ENCODE measurements at regions of chr9 and their contacts with region 1.

Region 1: GRCh38 chr9:7976167-7976755 is 176.7 kb upstream of the DMAC1 start:
- DNase-seq: peak; percentile 91
- H3K4me3 Mint-ChIP-seq: peak overlapping the region; percentile 65
- H3K27ac Mint-ChIP-seq: peak overlapping the region; percentile 81
- H3K4me1 Mint-ChIP-seq: peaks cover 49% of the 10 kb centered on the region
- H3K27me3 Mint-ChIP-seq: no peaks in the 10 kb centered on the region

Region 2: DNA sequence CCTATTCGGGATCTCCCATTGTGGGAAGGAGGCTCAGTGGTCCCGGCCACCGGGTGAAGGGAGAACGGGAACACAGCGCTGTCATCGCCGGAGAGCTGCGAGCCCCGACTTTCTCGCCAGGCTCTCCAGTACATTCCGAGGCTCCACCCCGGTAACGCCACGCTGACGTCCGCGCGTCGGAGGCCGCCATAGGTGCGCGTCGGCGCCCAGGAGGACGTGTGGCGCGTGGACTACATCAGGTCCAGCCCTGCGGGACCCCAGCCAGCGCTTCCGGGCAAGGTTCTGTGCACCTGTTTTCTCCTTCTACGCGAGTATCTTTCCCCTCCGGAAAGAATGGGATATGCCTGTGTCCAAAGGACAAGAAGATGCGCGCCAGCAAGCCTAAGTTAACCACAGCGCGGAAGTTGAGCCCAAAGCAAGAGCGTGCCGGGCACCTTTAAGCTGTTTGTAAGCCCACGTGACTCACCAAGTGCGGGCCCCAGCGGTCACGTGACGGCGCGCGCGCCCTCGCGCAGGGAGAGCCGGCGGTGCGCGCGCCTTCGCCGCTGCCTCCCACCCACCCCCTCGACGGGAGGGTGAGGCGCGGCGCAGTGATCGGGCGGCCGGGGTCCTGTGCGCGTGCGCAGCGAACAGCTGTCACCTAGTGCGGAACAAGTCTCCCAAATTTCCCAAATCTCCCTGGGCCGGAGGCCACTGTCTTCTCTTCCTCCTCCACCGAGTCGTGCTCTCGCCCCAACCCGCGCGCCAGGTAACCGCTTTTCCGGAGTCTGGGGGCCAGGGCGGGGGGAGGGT is 1218.6 kb before region 1 on chr9 and contains the start of gene KDM4C:
- intact Hi-C with region 1: loop called (anchors 2 kb)
- DNase-seq: peak; percentile 98
- H3K4me3 Mint-ChIP-seq: peak within 1 kb of the TSS; percentile 97
- H3K27ac Mint-ChIP-seq: peak within 1 kb of the TSS; percentile 99
- H3K4me1 Mint-ChIP-seq: peaks cover 23% of the 10 kb centered on the region
- H3K27me3 Mint-ChIP-seq: no peaks in the 10 kb centered on the region
- total RNA-seq, gene KDM4C: 36.4 and 39.8 TPM in 2 replicates

Region 3: GRCh38 chr9:7216004-7216831 is 760.0 kb before region 1 on chr9:
- intact Hi-C with region 1: loop called (anchors 10 kb)
- DNase-seq: peak; percentile 85
- H3K4me3 Mint-ChIP-seq: peak overlapping the region; percentile 45
- H3K27ac Mint-ChIP-seq: peak overlapping the region; percentile 62
- H3K4me1 Mint-ChIP-seq: peaks cover 18% of the 10 kb centered on the region
- H3K27me3 Mint-ChIP-seq: peaks cover 32% of the 10 kb centered on the region

Region 4: DNA sequence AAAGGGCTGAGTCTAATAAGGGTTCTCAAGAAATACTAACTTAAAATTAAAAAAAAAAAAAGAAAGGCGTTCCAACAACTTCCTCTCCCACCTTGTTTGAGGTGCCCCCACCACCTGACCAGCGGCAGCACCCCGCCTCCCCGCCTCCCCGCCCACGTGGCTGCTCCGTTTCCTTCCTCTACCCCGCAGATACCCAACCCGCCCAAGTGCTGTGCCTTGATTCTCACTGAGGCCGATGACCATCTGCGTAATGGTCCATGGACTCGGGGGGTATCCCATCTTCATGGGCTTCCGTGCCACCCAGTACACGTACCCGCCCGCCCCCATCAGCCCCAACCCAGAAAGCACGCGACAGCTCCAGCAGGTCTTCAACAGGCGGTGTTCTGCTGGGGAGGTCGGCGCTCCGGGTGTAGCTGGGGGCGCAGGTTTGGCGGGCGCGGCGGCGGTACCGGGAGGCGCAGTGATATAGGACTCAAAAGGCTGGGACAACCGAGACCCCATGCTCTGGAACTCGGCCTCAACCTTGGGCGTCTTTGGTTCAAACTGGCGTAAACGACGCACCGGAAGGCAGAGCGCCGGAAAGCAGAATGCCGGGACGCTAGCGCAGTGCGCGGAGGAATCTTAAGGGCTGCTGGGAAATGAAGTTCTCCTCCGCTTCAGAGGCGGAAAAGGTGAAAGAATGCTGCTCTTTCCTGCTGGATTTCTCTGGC is 176.9 kb before region 1 on chr9 and contains the start of gene DMAC1:
- intact Hi-C with region 1: loop called (anchors 1 kb)
- DNase-seq: peak; percentile 93
- H3K4me3 Mint-ChIP-seq: peak within 1 kb of the TSS; percentile 95
- H3K27ac Mint-ChIP-seq: peak within 1 kb of the TSS; percentile 95
- H3K4me1 Mint-ChIP-seq: peaks cover 15% of the 10 kb centered on the region
- H3K27me3 Mint-ChIP-seq: peaks cover under 1% of the 10 kb centered on the region
- total RNA-seq, gene DMAC1: 44.2 and 51.6 TPM in 2 replicates

Region 5: GRCh38 chr9:8115570-8115969 is 139.3 kb after region 1 on chr9:
- intact Hi-C with region 1: loop called (anchors 10 kb)
- DNase-seq: no peak
- H3K4me3 Mint-ChIP-seq: no peak overlapping the region
- H3K27ac Mint-ChIP-seq: peak overlapping the region; percentile 58
- H3K4me1 Mint-ChIP-seq: peaks cover 9% of the 10 kb centered on the region
- H3K27me3 Mint-ChIP-seq: peaks cover 3% of the 10 kb centered on the region

Measured in activated CD4-positive, alpha-beta T cell treated with anti-CD3 and anti-CD28 coated beads, Interleukin-2, amount 10 ng/mL, durations not matched to agents 24 days and 14 days (primary cell).